CD8-positive, alpha-beta T cell (primary cell): ENCODE measurements at regions of chr16 and their contacts with region 1.

Region 1: DNA sequence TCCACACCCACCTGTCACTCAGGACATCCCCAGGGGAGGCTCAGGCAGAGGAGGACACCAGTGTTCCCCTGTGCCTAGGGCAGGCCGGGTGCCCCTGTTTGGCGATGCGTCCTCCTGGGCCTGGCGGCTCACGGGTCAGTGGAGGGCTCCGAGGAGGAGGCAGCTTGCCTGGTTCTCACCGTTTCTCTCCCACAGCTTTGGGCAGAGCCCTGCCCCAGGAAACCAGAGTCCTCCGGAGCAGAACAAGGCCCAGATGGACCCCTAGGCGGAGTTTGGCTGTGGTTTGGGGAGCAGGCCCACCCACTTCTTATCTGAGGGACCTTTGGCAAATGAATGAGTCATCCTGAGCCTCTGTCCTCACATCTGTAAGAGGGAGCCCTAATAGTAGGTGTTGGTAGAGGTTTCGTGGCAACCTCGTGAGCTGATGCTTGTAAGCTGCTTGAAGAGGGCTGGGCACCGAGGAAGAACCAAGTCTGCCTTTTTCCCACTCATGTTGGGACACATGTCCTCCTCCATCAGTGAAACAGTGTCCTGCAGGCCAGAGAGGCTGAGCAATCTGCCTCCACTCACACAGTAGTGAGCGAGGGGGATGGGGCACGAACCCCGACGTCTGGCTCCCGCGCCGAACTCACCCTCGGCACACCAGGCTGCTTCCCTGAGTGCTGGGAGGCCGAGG is 247.0 kb upstream of the CIBAR2 start:
- DNase-seq: no peak
- ATAC-seq: no peak
- H3K4me3 ChIP-seq: no peak overlapping the region
- H3K4me3 Mint-ChIP-seq: no peak overlapping the region
- H3K27ac ChIP-seq: no peak overlapping the region
- H3K27ac Mint-ChIP-seq: no peak overlapping the region
- H3K4me1 ChIP-seq: no peaks in the 10 kb centered on the region
- H3K4me1 Mint-ChIP-seq: no peaks in the 10 kb centered on the region
- H3K27me3 ChIP-seq: no peaks in the 10 kb centered on the region
- H3K27me3 Mint-ChIP-seq: peaks cover 6% of the 10 kb centered on the region
- CTCF ChIP-seq: no peak

Region 2: GRCh38 chr16:85369741-85370528 is 10.7 kb after region 1 on chr16:
- CTCF ChIA-PET with region 1: interaction called, 10 read pairs
- POLR2A ChIA-PET with region 1: no interaction called
- intact Hi-C with region 1: no loop called
- DNase-seq: peak; percentile 16 to 67 (median 48)
- ATAC-seq: peak; percentile 78
- H3K4me3 ChIP-seq: no peak overlapping the region
- H3K4me3 Mint-ChIP-seq: no peak overlapping the region
- H3K27ac ChIP-seq: no peak overlapping the region
- H3K27ac Mint-ChIP-seq: no peak overlapping the region
- H3K4me1 ChIP-seq: no peaks in the 10 kb centered on the region
- H3K4me1 Mint-ChIP-seq: no peaks in the 10 kb centered on the region
- H3K27me3 ChIP-seq: no peaks in the 10 kb centered on the region
- H3K27me3 Mint-ChIP-seq: no peaks in the 10 kb centered on the region
- CTCF ChIP-seq: peak; percentile 72